ENCODE measurements at regions of chr7 and their contacts with region 1.

Region 1: DNA sequence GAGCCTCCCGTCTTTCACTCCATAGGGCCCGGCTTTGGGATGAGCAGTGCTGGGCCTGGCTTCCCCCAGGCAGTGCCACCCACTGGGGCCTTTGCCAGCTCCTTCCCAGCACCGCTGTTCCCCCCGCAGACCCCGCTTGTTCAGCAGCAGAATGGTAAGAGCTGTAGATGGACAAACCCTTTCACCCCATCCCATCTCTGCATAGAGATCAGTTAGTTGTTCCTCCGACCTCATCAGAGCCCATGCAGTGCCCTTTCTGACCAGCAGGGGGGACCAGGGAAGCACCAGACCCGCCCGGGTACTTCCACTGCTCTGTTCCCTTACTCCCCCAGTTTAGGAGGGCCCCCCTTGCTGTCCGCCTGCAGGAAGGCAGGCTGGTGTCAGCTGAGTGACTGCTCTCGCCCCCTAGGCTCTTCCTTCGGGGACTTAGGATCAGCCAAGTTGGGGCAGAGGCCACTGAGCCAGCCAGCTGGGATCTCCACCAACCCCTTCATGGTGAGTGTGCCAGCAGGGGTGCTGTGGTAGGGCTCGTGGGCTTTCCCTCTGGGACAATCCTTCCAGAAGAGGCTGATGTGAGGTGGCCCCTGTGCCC is 9.8 kb downstream of the SAP25 start:
- DNase-seq: peak; percentile 66 to 96 (median 85)
- ATAC-seq: peak; percentile 32 to 58 (median 50)
- H3K4me3 ChIP-seq: no peak overlapping the region
- H3K27ac ChIP-seq: no peak overlapping the region
- H3K4me1 ChIP-seq: peaks cover 11 to 25% (median 19%) of the 10 kb centered on the region in 3 donors
- H3K27me3 ChIP-seq: no peaks in the 10 kb centered on the region
- CTCF ChIP-seq: peak; percentile 80 to 98 (median 92)

Region 2: GRCh38 chr7:100469227-100470044 is 94.5 kb before region 1 on chr7:
- intact Hi-C with region 1: loop called in 2 of 3 experiments (anchors 5 kb)
- DNase-seq: peak; percentile 80 to 99 (median 92)
- ATAC-seq: peak; percentile 64 to 90 (median 82)
- H3K4me3 ChIP-seq: no peak overlapping the region
- H3K27ac ChIP-seq: no peak overlapping the region
- H3K4me1 ChIP-seq: peaks cover 0 to 5% (median 0%) of the 10 kb centered on the region in 3 donors
- H3K27me3 ChIP-seq: no peaks in the 10 kb centered on the region
- CTCF ChIP-seq: peak; percentile 86 to 94 (median 88)

Region 3: GRCh38 chr7:100691676-100692577 is 128.0 kb after region 1 on chr7:
- intact Hi-C with region 1: loop called in 2 of 3 experiments (anchors 5 to 10 kb)
- DNase-seq: peak; percentile 67 to 94 (median 82)
- ATAC-seq: peak; percentile 66 to 89 (median 86)
- H3K4me3 ChIP-seq: peak overlapping the region in 2 of 4 donors; percentile 92 to 96
- H3K27ac ChIP-seq: no peak overlapping the region
- H3K4me1 ChIP-seq: peaks cover 10 to 17% (median 14%) of the 10 kb centered on the region in 3 donors
- H3K27me3 ChIP-seq: no peaks in the 10 kb centered on the region
- CTCF ChIP-seq: peak; percentile 76 to 95 (median 87)

Region 4: DNA sequence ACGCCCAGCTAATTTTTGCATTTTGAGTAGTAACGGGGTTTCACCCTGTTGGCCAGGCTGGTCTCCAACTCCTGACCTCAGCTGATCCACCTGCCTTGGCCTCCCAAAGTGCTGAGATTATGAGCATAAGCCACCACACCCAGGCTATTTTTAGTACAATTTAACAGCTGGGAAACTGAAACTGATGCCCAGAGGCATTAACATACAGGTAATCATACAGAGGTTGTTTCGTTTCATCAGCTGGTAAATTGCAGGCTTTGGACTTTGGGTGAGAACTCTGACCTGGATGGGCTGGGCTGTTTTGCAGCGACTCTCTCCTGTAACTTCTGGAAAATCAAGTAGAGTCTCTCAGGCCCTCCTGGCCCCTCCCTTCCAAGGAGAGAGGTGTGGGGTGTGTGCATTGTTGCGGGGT is 338.0 kb after region 1 on chr7:
- intact Hi-C with region 1: no loop called
- DNase-seq: no peak
- ATAC-seq: no peak
- H3K4me3 ChIP-seq: no peak overlapping the region
- H3K27ac ChIP-seq: no peak overlapping the region
- H3K4me1 ChIP-seq: peaks cover 0 to 5% (median 0%) of the 10 kb centered on the region in 3 donors
- H3K27me3 ChIP-seq: no peaks in the 10 kb centered on the region
- CTCF ChIP-seq: no peak

Measured in pancreas (tissue), 10 donors.